Mammary epithelial cell (primary cell): ENCODE measurements at regions of chr17 and their contacts with region 1.

Region 1: GRCh38 chr17:58710936-58711775 is 18.8 kb downstream of the RAD51C start:
- DNase-seq: peak; percentile 19
- H3K4me3 ChIP-seq: no peak overlapping the region
- H3K27ac ChIP-seq: no peak overlapping the region
- H3K4me1 ChIP-seq: no peaks in the 10 kb centered on the region
- H3K27me3 ChIP-seq: no peaks in the 10 kb centered on the region
- CTCF ChIP-seq: peak; percentile 54 to 64

Region 2: DNA sequence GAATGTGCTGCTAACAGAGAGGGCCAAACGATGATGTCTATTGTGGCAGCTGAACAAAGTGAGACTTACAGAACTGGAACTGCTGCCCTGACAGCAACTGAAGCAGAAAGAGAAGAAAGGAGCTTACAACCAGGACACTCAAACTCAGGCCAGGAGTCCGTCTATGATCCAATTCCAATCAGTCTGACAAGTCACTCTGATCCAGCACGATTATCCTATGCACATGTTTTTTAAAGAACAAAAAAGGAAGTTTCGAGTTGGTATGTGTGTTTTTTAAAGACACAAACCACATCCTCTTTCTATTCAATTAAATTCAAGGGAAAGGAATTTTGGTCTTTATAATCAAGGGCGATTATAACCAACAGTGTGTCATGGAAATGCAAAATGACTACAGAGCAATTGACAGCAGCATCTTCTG is 154.3 kb before region 1 on chr17:
- CTCF ChIA-PET with region 1: no interaction called
- dilution Hi-C with region 1: no loop called
- in situ Hi-C with region 1: no loop called
- intact Hi-C with region 1: no loop called
- DNase-seq: no peak
- H3K4me3 ChIP-seq: no peak overlapping the region
- H3K27ac ChIP-seq: no peak overlapping the region
- H3K4me1 ChIP-seq: no peaks in the 10 kb centered on the region
- H3K27me3 ChIP-seq: no peaks in the 10 kb centered on the region
- CTCF ChIP-seq: no peak

Region 3: DNA sequence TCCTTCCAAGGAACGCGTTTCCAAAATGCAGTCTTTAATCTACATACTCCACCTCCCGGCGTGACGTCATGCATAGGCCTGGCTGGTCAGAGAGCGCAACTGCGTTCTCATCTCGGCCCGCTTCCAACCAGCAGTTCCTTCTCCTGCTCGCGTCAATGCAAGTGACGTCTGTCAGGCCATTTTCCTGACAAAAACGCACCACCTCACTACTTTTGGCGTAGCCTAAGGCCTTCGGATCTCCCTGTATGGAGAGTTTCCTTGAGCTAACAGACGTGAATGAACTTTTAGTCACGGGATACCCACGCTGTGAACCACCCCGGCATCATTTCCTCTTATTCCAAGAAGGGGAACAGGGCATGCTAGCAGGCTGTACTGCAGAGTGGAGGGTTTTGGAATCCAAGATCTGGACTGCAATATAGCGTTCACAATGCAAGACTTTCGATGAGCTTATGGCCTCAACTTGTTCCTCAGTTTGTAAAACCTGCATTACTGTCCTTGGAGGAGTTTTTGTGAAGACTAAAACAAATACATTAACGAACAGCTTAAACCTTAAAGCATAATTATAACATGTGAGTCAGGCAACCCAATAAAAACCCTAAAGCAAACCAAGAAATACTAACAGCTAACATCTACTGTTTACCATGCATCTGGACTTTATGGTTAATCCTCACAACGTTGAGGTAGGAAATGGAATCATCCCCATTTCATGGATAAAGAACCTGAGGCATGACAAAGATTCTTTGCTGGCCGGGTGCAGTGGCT is 44.1 kb before region 1 on chr17:
- CTCF ChIA-PET with region 1: no interaction called
- dilution Hi-C with region 1: no loop called
- in situ Hi-C with region 1: no loop called
- intact Hi-C with region 1: no loop called
- DNase-seq: no peak
- H3K4me3 ChIP-seq: no peak overlapping the region
- H3K27ac ChIP-seq: no peak overlapping the region
- H3K4me1 ChIP-seq: peaks cover 6% of the 10 kb centered on the region
- H3K27me3 ChIP-seq: no peaks in the 10 kb centered on the region
- CTCF ChIP-seq: no peak

Region 4: DNA sequence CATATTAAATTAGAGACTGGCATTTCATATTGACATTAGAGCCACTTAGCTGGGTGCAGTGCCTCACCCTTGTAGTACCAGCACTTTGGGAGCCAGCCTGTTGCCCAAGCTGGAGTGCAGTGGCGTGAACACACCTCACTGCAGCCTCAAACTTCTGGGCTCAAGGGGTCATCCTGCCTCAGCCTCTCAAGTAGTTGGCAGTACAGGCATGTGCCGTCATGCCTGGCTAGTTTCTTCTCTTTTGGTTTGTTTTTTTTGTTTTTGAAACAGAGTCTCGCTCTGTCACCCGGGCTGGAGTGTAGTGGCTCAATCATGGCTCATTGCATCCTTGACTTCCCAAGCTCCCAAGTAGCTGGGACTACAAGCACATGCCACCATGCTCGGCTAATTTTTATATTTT is 53.2 kb after region 1 on chr17:
- CTCF ChIA-PET with region 1: no interaction called
- dilution Hi-C with region 1: no loop called
- in situ Hi-C with region 1: no loop called
- intact Hi-C with region 1: no loop called
- DNase-seq: no peak
- H3K4me3 ChIP-seq: no peak overlapping the region
- H3K27ac ChIP-seq: no peak overlapping the region
- H3K4me1 ChIP-seq: peaks cover 6% of the 10 kb centered on the region
- H3K27me3 ChIP-seq: no peaks in the 10 kb centered on the region
- CTCF ChIP-seq: no peak

Region 5: DNA sequence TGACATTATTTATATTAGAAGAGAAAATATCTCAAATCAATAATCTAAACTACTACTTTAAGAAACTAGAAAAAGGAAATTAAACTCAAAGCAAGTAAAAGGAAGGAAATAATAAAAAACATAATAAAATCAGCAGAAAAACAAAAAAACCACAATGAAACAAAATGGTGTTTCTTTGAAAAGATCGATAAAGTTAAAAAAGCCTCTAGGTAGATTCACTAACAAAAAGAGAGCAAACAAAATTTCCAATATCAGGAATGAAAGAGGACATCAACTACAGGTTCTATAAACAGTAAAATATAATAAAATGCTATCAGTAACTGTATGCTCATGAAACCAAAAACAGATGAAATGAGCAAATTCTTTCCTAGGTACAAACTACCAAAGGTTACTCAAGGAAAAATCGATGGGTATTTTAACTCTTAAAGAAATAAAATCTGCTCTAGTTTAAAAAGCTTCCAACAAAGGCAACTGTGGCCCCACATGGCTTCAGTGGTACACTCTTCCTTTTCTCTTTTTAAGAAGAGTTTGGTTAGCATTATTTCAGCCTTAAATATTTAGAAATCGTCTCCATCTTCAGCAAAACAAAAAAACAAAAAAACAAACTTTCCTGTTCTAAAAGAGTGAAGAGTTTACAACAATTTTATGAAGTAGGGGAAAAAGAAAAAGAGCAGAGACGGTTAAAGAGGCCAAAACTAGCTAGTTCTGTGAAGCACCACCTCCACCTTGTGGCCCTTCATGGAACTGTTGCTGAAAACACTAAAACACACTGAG is 293.4 kb after region 1 on chr17:
- CTCF ChIA-PET with region 1: interaction called, 14 read pairs
- dilution Hi-C with region 1: no loop called
- in situ Hi-C with region 1: loop called (anchors 10 kb)
- intact Hi-C with region 1: loop called (anchors 1 kb)
- DNase-seq: peak; percentile 29
- H3K4me3 ChIP-seq: no peak overlapping the region
- H3K27ac ChIP-seq: no peak overlapping the region
- H3K4me1 ChIP-seq: no peaks in the 10 kb centered on the region
- H3K27me3 ChIP-seq: no peaks in the 10 kb centered on the region
- CTCF ChIP-seq: peak; percentile 90 to 92